ENCODE measurements at regions of chr16 and their contacts with region 1.

Region 1: GRCh38 chr16:60611844-60612243 is 1424.4 kb downstream of the CDH8 start:
- DNase-seq: no peak
- H3K4me3 ChIP-seq: no peak overlapping the region
- H3K27ac ChIP-seq: no peak overlapping the region
- H3K4me1 ChIP-seq: no peaks in the 10 kb centered on the region
- H3K27me3 ChIP-seq: no peaks in the 10 kb centered on the region
- CTCF ChIP-seq: no peak
- EP300 ChIP-seq: no peak
- POLR2A ChIP-seq: no peak

Region 2: DNA sequence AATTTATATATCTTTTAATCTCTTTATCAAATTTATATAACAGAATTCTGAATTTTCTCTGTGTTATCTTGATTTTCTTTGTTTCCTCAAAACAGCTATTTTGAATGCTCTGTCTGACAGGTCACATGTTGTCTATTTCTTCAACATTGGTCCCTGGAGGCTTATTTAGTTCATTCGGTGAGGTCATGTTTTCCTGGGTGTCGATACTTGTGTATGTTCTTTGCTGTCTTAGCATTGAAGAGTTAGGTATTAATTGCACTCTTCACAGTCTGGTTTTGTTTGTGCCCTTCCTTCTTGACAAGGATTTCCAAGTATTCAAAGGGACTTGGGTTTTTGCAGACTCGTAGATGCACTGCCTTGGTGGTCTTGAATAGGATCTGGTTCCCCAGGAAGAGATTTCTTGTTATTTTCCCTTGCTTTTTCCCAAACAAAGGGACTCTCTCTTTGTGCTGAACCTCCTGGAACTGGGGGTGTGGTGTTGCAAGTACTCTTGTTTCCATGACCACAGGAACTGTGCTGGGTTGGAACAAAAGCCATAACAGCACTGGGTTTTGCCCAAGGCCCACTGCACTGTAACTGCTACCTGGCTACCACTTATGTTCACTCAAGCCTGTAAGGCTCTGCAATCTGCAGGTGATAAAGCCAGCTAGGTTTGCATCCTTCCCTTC is 58.6 kb before region 1 on chr16:
- in situ Hi-C with region 1: loop called in 1 of 4 experiments (anchors 10 kb)
- intact Hi-C with region 1: no loop called
- DNase-seq: no peak
- H3K4me3 ChIP-seq: no peak overlapping the region
- H3K27ac ChIP-seq: no peak overlapping the region
- H3K4me1 ChIP-seq: no peaks in the 10 kb centered on the region
- H3K27me3 ChIP-seq: no peaks in the 10 kb centered on the region
- CTCF ChIP-seq: no peak
- EP300 ChIP-seq: no peak
- POLR2A ChIP-seq: no peak

Region 3: GRCh38 chr16:60686824-60687223 is 75.0 kb after region 1 on chr16:
- in situ Hi-C with region 1: no loop called
- intact Hi-C with region 1: no loop called
- DNase-seq: no peak
- H3K4me3 ChIP-seq: no peak overlapping the region
- H3K27ac ChIP-seq: no peak overlapping the region
- H3K4me1 ChIP-seq: no peaks in the 10 kb centered on the region
- H3K27me3 ChIP-seq: no peaks in the 10 kb centered on the region
- CTCF ChIP-seq: no peak
- EP300 ChIP-seq: no peak
- POLR2A ChIP-seq: no peak

Region 4: DNA sequence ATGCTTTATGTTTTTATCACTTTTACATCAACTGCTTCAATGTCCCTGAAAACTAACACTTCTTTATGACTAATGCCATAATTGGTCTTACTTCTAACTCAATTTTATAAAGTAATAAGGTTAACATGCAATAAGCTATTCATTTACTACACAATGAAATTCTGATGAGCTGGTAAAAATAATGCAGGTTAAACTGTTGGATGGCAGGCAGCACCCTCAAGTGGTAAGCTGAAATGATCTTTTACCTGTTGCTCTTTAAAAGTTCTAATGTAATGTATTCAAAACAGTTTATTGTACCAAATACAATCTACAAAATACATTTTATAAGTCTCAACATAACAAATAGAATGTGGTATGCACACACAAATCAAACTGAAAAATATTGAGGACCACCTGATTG is 144.1 kb after region 1 on chr16:
- in situ Hi-C with region 1: no loop called
- intact Hi-C with region 1: no loop called
- DNase-seq: no peak
- H3K4me3 ChIP-seq: no peak overlapping the region
- H3K27ac ChIP-seq: no peak overlapping the region
- H3K4me1 ChIP-seq: no peaks in the 10 kb centered on the region
- H3K27me3 ChIP-seq: no peaks in the 10 kb centered on the region
- CTCF ChIP-seq: no peak
- EP300 ChIP-seq: no peak
- POLR2A ChIP-seq: no peak

Measured in transverse colon (tissue), 4 donors.